ENCODE measurements at regions of chr9 and their contacts with region 1.

Region 1: GRCh38 chr9:85155352-85155751 is 485.8 kb downstream of the NTRK2 start:
- DNase-seq: no peak
- ATAC-seq: no peak
- H3K4me3 ChIP-seq: no peak overlapping the region
- H3K4me1 ChIP-seq: no peaks in the 10 kb centered on the region
- CTCF ChIP-seq: no peak

Region 2: GRCh38 chr9:85089188-85089969 is 66.0 kb before region 1 on chr9:
- intact Hi-C with region 1: loop called in 1 of 2 experiments (anchors 10 kb)
- DNase-seq: no peak
- ATAC-seq: no peak
- H3K4me3 ChIP-seq: no peak overlapping the region
- H3K4me1 ChIP-seq: no peaks in the 10 kb centered on the region
- CTCF ChIP-seq: no peak

Measured in mucosa of descending colon (tissue), 3 donors.